Gastrocnemius medialis (tissue), 4 donors: ENCODE measurements at regions of chr15 and their contacts with region 1.

Region 1: DNA sequence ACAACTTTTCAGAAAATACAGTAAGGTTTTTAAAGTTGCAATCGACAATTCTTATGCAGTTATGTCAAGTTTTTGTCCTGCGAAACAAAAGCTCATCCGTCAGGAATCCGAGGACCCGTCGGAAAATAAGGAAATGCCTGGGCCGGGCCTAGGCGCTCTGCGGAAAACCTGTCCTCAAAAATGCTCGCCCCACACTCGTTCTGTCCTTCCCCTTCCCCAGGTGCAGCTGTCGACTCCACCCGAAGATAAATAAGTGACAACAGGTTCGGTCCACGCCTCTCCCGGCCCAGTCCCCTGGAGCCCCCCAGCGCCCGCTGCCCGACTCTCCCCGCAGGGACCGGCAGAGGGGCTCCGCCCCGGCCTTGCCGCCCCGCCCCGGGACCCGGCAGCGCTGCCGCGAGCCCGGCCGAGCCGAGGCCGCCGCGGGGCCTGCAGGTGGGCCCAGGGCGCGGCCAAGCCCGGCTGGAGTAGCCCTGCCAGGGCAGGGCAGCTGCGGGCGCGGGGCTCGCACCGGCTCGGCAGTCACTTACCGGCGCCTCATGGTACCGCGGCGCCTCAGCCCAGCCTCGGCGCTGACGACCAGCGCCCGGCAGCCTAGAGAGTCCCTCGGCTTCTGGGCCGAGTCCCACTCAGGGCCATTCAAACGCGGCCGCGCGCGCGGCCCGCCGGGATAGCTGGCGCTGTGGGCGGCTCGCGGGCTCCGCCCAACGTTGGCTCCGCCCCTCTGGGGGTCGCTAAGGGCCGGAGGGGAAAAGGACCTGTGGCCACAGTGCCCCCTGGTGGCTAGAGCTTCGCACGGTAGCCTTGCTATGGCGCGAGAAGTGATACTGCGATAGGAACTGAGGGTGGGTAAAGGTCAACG is at the start of gene KATNBL1:
- DNase-seq: peak; percentile 88 to 93
- ATAC-seq: peak; percentile 96 to 98
- H3K4me3 ChIP-seq: peak within 1 kb of the TSS; percentile 58 to 73 (median 69)
- H3K27ac ChIP-seq: peak within 1 kb of the TSS; percentile 3 to 84 (median 75)
- H3K4me1 ChIP-seq: peaks cover 12% of the 10 kb centered on the region in 2 donors
- H3K27me3 ChIP-seq: no peaks in the 10 kb centered on the region
- CTCF ChIP-seq: peak; percentile 92 to 96 (median 96)
- POLR2A ChIP-seq: peak; percentile 63 to 92
- total RNA-seq, gene KATNBL1: 9.2 to 24.9 (median 12.3) TPM

Region 2: GRCh38 chr15:33716025-33716424 is 493.6 kb before region 1 on chr15:
- in situ Hi-C with region 1: no loop called
- intact Hi-C with region 1: no loop called
- DNase-seq: no peak
- ATAC-seq: no peak
- H3K4me3 ChIP-seq: no peak overlapping the region
- H3K27ac ChIP-seq: no peak overlapping the region
- H3K4me1 ChIP-seq: no peaks in the 10 kb centered on the region
- H3K27me3 ChIP-seq: no peaks in the 10 kb centered on the region
- CTCF ChIP-seq: no peak
- POLR2A ChIP-seq: no peak

Region 3: DNA sequence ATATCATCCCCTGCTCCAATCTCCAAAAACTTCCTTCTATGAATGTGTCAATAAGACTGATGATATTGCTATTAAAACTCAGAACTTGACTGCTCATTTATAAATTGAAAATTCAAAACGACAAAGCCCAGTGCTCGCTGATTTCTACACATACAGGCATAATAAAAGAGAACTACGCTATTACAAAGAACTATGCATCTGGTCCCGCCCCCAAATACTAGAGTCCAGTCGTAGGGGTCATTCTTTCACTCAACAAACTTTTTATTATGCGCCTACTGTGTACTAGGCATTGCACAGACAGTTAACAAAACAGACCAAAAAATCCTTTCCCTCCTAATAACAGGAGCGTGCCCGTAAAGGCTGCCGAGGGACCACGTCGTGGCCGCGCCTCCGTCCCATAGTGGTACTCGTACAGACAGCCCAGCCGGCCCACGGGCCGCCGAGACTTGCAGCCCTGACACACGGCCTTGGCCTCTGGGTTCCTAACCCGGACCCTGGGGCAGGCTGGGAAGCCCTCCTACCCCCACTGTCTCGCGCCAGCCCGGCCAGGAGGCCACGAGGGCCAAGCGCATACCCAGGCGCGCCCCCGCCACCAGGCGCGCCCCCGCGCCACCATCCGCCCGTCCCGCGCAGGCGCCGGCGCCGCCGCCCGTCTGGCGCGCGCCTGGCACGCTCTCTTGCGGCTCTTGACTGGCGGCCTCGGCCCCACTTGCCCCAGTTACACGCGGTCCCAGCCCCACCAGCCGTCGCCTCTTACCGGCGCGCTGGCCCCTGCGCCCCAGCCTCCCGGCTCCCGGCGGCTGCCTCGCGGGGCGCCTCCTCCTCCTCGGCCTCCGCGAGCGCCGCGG is 171.4 kb before region 1 on chr15:
- in situ Hi-C with region 1: no loop called
- intact Hi-C with region 1: loop called (anchors 1 kb)
- DNase-seq: peak; percentile 59 to 80
- ATAC-seq: peak; percentile 93 to 95
- H3K4me3 ChIP-seq: peak overlapping the region; percentile 78 to 88 (median 82)
- H3K27ac ChIP-seq: peak overlapping the region; percentile 87 to 93 (median 89)
- H3K4me1 ChIP-seq: peaks cover 10 to 14% of the 10 kb centered on the region in 2 donors
- H3K27me3 ChIP-seq: no peaks in the 10 kb centered on the region
- CTCF ChIP-seq: no peak
- POLR2A ChIP-seq: peak; percentile 70 to 72

Region 4: GRCh38 chr15:34065941-34066340 is 143.7 kb before region 1 on chr15:
- in situ Hi-C with region 1: loop called in 3 of 4 experiments (anchors 5 to 10 kb)
- intact Hi-C with region 1: loop called (anchors 1 kb)
- DNase-seq: no peak
- ATAC-seq: no peak
- H3K4me3 ChIP-seq: no peak overlapping the region
- H3K27ac ChIP-seq: no peak overlapping the region
- H3K4me1 ChIP-seq: peaks cover 0 to 6% of the 10 kb centered on the region in 2 donors
- H3K27me3 ChIP-seq: no peaks in the 10 kb centered on the region
- CTCF ChIP-seq: no peak
- POLR2A ChIP-seq: no peak

Region 5: GRCh38 chr15:34223904-34224596 is 14.4 kb after region 1 on chr15:
- in situ Hi-C with region 1: no loop called
- intact Hi-C with region 1: loop called (anchors 1 kb)
- DNase-seq: no peak
- ATAC-seq: peak; percentile 34 to 45
- H3K4me3 ChIP-seq: peak overlapping the region; percentile 75 to 93 (median 86)
- H3K27ac ChIP-seq: peak overlapping the region; percentile 83 to 96 (median 87)
- H3K4me1 ChIP-seq: peaks cover 14 to 15% of the 10 kb centered on the region in 2 donors
- H3K27me3 ChIP-seq: no peaks in the 10 kb centered on the region
- CTCF ChIP-seq: no peak
- POLR2A ChIP-seq: no peak